Left lung (tissue), 14 donors: ENCODE measurements at regions of chr1 and their contacts with region 1.

Region 1: DNA sequence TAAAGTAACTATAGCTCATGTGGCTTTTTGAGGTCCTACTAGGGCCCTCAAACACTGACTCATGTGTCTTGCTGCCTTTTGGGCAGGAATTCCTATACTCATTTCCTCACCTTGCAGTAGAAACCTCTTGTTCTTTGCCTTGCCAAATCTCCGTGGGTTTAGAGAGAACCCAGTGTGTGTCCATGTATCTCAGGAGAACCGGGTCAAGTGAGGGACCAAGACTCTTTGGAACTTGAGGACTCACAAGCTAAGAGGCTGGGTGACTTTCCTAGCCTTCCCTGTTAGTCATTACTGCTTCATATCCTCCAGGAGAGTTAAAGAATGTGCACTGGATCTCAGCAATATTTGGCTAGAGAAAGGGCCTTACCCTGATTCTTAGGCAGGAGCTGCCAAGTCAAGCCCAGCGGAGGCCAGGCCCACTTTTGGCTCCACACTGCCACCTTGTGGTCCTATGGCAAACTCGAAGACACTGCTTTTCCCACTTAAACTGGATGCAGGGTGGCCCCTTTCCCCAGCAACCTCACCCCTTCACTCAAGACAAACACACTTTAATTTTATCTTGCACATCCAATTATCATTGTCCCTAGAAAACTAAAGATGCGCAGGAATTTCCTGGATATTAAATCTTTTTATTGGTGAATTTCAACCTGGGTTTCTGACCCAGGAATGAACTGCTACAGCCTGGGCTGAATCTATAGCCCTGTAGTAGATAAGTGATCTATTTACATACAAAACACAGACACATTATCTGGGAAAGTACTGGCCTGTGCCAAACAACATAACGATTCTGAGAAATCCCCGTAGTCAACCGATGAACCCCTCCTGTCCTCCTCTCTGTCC is 10.6 kb downstream of the AVPR1B start:
- DNase-seq: peak; percentile 79 to 92 (median 86)
- ATAC-seq: peak; percentile 96
- H3K4me3 ChIP-seq: no peak overlapping the region
- H3K27ac ChIP-seq: peak overlapping the region in 1 of 2 donors; percentile 7
- H3K4me1 ChIP-seq: peaks cover 0 to 10% of the 10 kb centered on the region in 2 donors
- H3K27me3 ChIP-seq: no peaks in the 10 kb centered on the region
- CTCF ChIP-seq: peak; percentile 88 to 95

Region 2: GRCh38 chr1:205645519-205645918 is 461.0 kb before region 1 on chr1:
- intact Hi-C with region 1: no loop called
- DNase-seq: no peak
- ATAC-seq: no peak
- H3K4me3 ChIP-seq: no peak overlapping the region
- H3K27ac ChIP-seq: no peak overlapping the region
- H3K4me1 ChIP-seq: no peaks in the 10 kb centered on the region
- H3K27me3 ChIP-seq: no peaks in the 10 kb centered on the region
- CTCF ChIP-seq: no peak

Region 3: GRCh38 chr1:205983925-205984725 is 122.4 kb before region 1 on chr1:
- intact Hi-C with region 1: loop called (anchors 10 kb)
- DNase-seq: peak in 3 of 4 donors; percentile 26 to 63 (median 56)
- ATAC-seq: peak; percentile 93
- H3K4me3 ChIP-seq: no peak overlapping the region
- H3K27ac ChIP-seq: no peak overlapping the region
- H3K4me1 ChIP-seq: peaks cover 0 to 7% of the 10 kb centered on the region in 2 donors
- H3K27me3 ChIP-seq: no peaks in the 10 kb centered on the region
- CTCF ChIP-seq: peak; percentile 70 to 83

Region 4: DNA sequence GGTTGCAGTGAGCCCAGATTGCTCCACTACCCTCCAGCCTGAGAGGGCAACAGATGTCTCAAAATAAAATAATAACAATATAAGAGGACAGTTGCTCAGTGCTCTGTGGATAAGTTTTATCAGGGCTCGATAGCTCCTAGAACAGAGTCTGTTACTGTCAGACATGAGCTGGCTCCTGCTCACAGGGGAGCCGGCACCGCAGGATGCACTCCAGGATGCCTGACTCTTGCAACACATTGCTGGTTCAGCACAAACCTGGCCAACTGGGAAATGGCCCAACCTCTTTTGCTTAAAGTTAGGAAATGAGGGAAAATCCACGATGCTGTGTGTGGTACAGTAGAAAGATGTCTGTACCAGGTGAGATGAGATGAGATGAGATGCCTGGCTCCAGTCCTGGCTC is 77.1 kb before region 1 on chr1:
- intact Hi-C with region 1: loop called in 1 of 2 experiments (anchors 5 kb)
- DNase-seq: peak in 1 of 4 donors; percentile 66
- ATAC-seq: peak; percentile 73
- H3K4me3 ChIP-seq: no peak overlapping the region
- H3K27ac ChIP-seq: no peak overlapping the region
- H3K4me1 ChIP-seq: peaks cover 0 to 18% of the 10 kb centered on the region in 2 donors
- H3K27me3 ChIP-seq: no peaks in the 10 kb centered on the region
- CTCF ChIP-seq: no peak